B cell (primary cell): ENCODE measurements at regions of chr11 and their contacts with region 1.

Region 1: GRCh38 chr11:62665075-62665598 is at the starts of genes C11orf98 and CSKMT:
- DNase-seq: peak; percentile 95
- ATAC-seq: peak; percentile 90
- H3K4me3 ChIP-seq: peak within 1 kb of the TSS; percentile 79 to 98 (median 91)
- H3K4me3 Mint-ChIP-seq: peak within 1 kb of the TSS; percentile 97
- H3K27ac ChIP-seq: peak within 1 kb of the TSS; percentile 73 to 81
- H3K27ac Mint-ChIP-seq: peak within 1 kb of the TSS; percentile 93
- H3K4me1 ChIP-seq: peaks cover 17 to 35% of the 10 kb centered on the region in 2 donors
- H3K4me1 Mint-ChIP-seq: peaks cover 45% of the 10 kb centered on the region
- H3K27me3 ChIP-seq: no peaks in the 10 kb centered on the region
- H3K27me3 Mint-ChIP-seq: no peaks in the 10 kb centered on the region
- CTCF ChIP-seq: no peak
- total RNA-seq, gene C11orf98: 48.1 and 52.0 TPM in 2 replicates
- total RNA-seq, gene CSKMT: 57.3 and 78.7 TPM in 2 replicates

Region 2: DNA sequence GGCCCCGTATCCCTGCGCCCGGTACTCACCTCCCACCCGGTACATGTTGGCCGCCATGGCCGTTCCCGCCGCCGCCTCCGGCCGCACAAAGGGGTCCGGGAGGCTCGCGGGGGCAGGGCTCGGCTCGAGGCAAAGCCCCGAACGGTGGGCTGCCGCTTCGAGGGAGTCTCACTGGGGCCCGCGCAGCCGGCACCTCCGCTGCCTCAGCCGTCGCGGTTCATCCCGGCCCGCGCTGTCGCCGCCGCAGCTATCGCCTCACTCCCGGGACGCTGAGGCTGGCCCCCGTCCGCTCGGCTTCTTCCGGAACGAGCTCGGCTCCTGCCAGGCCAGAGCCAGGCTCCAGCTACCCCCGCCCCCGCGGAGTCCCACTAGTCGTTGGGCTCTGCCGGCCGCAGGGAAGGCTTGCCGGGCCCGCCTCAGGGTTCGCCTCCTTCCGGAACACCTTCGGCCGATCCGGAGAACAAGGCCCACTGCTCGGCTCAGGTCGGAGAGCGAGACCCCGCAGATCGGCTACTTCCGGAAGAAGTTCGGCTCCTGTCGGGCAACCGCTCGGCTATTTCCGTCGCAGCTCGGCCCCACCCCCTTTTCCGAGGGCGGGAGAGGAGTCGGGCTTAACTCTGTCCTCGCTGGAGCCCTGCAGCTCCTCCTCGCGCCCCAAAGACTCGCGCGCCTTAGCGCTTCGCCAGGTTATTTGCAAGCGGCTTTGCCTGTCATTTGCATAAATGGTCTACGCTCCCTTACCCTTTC is 63.6 kb before region 1 on chr11 and contains the start of gene MTA2:
- CTCF ChIA-PET with region 1: interaction called, 3 read pairs
- POLR2A ChIA-PET with region 1: interaction called, 12 read pairs
- intact Hi-C with region 1: no loop called
- DNase-seq: peak; percentile 99
- ATAC-seq: peak; percentile 78
- H3K4me3 ChIP-seq: peak within 1 kb of the TSS; percentile 82 to 97 (median 86)
- H3K4me3 Mint-ChIP-seq: peak within 1 kb of the TSS; percentile 97
- H3K27ac ChIP-seq: peak within 1 kb of the TSS; percentile 78 to 90
- H3K27ac Mint-ChIP-seq: peak within 1 kb of the TSS; percentile 96
- H3K4me1 ChIP-seq: peaks cover 24 to 40% of the 10 kb centered on the region in 2 donors
- H3K4me1 Mint-ChIP-seq: peaks cover 46% of the 10 kb centered on the region
- H3K27me3 ChIP-seq: no peaks in the 10 kb centered on the region
- H3K27me3 Mint-ChIP-seq: no peaks in the 10 kb centered on the region
- CTCF ChIP-seq: no peak
- total RNA-seq, gene MTA2: 127 and 139 TPM in 2 replicates

Region 3: DNA sequence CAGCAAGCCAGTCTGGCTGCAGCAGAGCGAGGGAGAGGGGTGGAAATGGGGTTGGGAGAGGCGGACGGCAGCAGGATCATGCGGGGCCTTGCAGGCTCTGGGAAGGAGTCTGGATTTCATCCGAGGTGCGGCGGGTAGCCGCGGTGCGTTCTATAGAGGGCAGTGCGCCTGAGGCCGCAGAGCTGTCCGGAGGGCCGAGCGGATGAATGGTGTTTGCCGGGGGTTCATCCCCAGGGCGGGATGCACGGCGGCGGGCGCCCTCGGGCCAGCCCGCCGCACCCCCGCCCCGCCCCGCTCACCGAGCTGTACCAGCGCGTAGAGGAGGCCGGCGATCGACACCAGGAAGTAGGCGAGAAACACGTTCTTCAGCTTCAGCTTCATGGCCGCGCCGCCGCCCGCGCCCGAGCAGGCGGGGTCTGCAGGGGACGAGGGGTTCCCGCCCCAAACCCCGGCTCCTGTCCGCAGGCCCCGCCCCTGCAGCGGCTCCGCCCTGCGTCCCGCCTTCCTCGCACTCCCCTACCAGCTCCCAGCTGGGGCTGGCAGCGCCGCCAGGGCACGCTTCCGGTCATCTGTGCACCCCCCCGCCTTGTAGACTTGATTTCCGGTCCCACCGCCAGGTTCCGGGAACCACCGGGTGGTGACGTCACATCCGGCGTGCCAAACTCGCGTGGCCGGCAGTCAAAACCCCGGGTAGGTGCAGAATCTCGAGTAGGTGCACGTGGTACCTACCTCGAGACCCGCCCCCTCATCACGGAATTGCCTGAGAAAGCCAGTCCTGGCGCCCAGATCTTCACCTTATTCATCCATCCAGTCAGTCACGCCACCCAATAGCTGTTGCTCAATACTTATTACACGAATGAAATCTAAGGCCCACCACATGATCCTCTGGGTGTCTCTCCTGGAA is 43.3 kb before region 1 on chr11 and contains the start of gene B3GAT3:
- CTCF ChIA-PET with region 1: interaction called, 3 read pairs
- POLR2A ChIA-PET with region 1: interaction called, 13 read pairs
- intact Hi-C with region 1: loop called (anchors 2 kb)
- DNase-seq: peak; percentile 99
- ATAC-seq: peak; percentile 92
- H3K4me3 ChIP-seq: peak within 1 kb of the TSS; percentile 80 to 93 (median 88)
- H3K4me3 Mint-ChIP-seq: peak within 1 kb of the TSS; percentile 98
- H3K27ac ChIP-seq: peak within 1 kb of the TSS; percentile 88 to 98
- H3K27ac Mint-ChIP-seq: peak within 1 kb of the TSS; percentile 95
- H3K4me1 ChIP-seq: peaks cover 11 to 19% of the 10 kb centered on the region in 2 donors
- H3K4me1 Mint-ChIP-seq: peaks cover 23% of the 10 kb centered on the region
- H3K27me3 ChIP-seq: no peaks in the 10 kb centered on the region
- H3K27me3 Mint-ChIP-seq: no peaks in the 10 kb centered on the region
- CTCF ChIP-seq: no peak
- total RNA-seq, gene B3GAT3: 63.1 and 66.6 TPM in 2 replicates

Region 4: GRCh38 chr11:62652161-62653006 is 12.8 kb before region 1 on chr11:
- CTCF ChIA-PET with region 1: interaction called, 13 read pairs
- POLR2A ChIA-PET with region 1: interaction called, 62 read pairs
- intact Hi-C with region 1: loop called (anchors 1 kb)
- DNase-seq: no peak
- ATAC-seq: no peak
- H3K4me3 ChIP-seq: peak overlapping the region; percentile 74 to 90 (median 83)
- H3K4me3 Mint-ChIP-seq: peak overlapping the region; percentile 94
- H3K27ac ChIP-seq: peak overlapping the region; percentile 68 to 89
- H3K27ac Mint-ChIP-seq: peak overlapping the region; percentile 97
- H3K4me1 ChIP-seq: peaks cover 14 to 18% of the 10 kb centered on the region in 2 donors
- H3K4me1 Mint-ChIP-seq: peaks cover 22% of the 10 kb centered on the region
- H3K27me3 ChIP-seq: no peaks in the 10 kb centered on the region
- H3K27me3 Mint-ChIP-seq: no peaks in the 10 kb centered on the region
- CTCF ChIP-seq: no peak

Region 5: DNA sequence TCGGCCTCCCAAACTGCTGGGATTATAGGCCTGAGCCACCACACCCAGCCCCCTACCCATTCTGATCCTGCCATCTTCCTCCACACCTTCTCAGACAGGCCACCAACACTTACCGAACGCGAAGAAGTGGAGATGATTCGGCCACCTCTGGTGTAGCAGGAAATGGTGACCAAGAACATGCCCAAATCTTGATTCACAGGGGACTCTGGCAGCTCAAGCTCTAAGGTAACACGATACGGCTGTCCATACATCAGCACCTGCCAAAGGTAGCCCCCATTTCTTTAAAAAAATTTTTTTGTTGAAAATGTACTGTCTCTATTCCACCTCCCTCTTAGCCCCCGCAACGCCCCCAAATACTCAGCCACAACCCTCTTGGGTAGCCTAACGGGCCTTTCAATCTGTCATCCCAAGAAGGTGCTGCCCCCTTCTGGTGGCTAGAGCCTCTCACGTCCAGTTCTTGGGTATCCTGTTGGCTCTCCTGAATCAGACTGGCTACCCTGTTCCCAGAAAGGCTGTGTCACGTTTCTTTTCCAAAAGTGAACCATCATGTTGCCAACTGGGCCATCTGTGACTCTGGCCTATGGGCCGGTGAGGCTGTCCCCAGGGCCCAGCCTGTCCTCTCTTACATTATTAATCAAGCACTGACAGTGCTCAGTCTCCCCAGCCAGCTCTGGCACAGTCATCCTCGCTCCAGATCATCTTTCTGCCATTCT is 29.5 kb after region 1 on chr11:
- CTCF ChIA-PET with region 1: interaction called, 17 read pairs
- POLR2A ChIA-PET with region 1: no interaction called
- intact Hi-C with region 1: no loop called
- DNase-seq: peak; percentile 85
- ATAC-seq: peak; percentile 71
- H3K4me3 ChIP-seq: no peak overlapping the region
- H3K4me3 Mint-ChIP-seq: no peak overlapping the region
- H3K27ac ChIP-seq: no peak overlapping the region
- H3K27ac Mint-ChIP-seq: no peak overlapping the region
- H3K4me1 ChIP-seq: peaks cover 0 to 6% of the 10 kb centered on the region in 2 donors
- H3K4me1 Mint-ChIP-seq: peaks cover 5% of the 10 kb centered on the region
- H3K27me3 ChIP-seq: no peaks in the 10 kb centered on the region
- H3K27me3 Mint-ChIP-seq: no peaks in the 10 kb centered on the region
- CTCF ChIP-seq: peak; percentile 87

Region 6: DNA sequence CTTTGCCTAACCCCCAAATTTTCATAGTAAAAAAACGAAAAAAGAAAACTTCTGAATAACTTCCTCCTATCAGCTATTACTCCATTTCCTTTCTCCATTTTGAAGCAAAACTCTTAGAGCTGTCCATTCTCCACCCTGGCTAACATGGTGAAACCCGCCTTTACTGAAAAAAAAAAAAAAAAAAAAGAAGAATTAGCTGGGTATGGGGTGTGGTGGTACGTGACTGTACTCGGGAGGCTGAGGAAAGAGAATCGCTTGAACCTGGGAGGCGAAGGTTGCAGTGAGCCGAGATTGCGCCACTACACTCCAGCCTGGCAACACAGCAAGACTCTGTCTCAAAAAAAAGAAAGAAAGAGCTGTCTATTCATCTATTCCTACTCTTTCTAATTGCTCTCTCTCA is 151.4 kb after region 1 on chr11:
- CTCF ChIA-PET with region 1: no interaction called
- POLR2A ChIA-PET with region 1: no interaction called
- intact Hi-C with region 1: no loop called
- DNase-seq: no peak
- ATAC-seq: no peak
- H3K4me3 ChIP-seq: no peak overlapping the region
- H3K4me3 Mint-ChIP-seq: no peak overlapping the region
- H3K27ac ChIP-seq: no peak overlapping the region
- H3K27ac Mint-ChIP-seq: no peak overlapping the region
- H3K4me1 ChIP-seq: no peaks in the 10 kb centered on the region
- H3K4me1 Mint-ChIP-seq: no peaks in the 10 kb centered on the region
- H3K27me3 ChIP-seq: no peaks in the 10 kb centered on the region
- H3K27me3 Mint-ChIP-seq: no peaks in the 10 kb centered on the region
- CTCF ChIP-seq: no peak